Activated naive CD4-positive, alpha-beta T cell treated with anti-CD3 and anti-CD28 coated beads for 36 hours (primary cell): ENCODE measurements at regions of chr3 and their contacts with region 1.

Region 1: DNA sequence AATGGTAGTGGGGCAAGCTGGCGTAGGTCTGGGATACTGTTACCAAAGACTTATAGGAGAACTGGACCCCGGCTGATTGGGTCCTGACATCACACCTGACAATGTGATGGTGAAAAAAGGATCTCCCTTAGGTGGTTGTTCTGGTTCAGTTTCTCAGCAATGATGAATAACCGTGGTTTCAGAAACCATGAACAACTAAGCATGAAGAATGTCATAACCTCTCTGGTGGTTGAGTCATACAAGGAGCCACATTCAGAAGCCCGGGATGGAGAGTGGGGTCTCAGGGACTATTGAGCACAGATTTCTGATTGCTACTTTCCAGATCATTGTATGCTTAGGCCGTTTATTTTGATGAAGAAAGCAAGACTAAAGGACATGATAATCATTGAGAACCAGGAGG is 17.4 kb downstream of the GPR160 start:
- DNase-seq: peak; percentile 58
- H3K4me3 Mint-ChIP-seq: no peak overlapping the region
- H3K27ac Mint-ChIP-seq: no peak overlapping the region
- H3K4me1 Mint-ChIP-seq: peaks cover 50% of the 10 kb centered on the region
- H3K27me3 Mint-ChIP-seq: no peaks in the 10 kb centered on the region

Region 2: GRCh38 chr3:169759256-169759655 is 296.0 kb before region 1 on chr3:
- CTCF ChIA-PET with region 1: interaction called, 3 read pairs
- intact Hi-C with region 1: loop called (anchors 1 kb)
- DNase-seq: peak; percentile 24
- H3K4me3 Mint-ChIP-seq: no peak overlapping the region
- H3K27ac Mint-ChIP-seq: peak overlapping the region; percentile 62
- H3K4me1 Mint-ChIP-seq: peaks cover 25% of the 10 kb centered on the region
- H3K27me3 Mint-ChIP-seq: no peaks in the 10 kb centered on the region

Region 3: DNA sequence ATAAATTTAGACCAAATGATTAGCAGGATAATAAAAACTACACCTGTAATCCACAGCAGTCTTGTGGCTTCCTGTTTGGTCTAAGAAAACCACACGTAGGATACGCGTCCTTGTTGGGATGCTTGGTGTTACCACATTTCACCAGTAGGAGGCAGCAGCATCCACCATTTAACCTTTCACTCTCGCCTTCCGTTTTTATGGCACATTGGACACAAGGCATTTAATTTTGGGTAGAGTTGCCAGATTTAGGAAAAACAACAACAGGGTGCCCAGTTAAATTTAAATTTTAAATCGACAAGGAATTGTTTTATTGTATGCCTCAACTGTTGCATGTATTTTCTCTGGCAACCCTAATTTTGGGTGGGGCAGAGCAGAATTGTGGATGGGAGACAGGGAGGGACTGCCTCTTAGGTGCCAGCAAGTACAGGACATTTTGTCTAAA is 191.7 kb before region 1 on chr3:
- CTCF ChIA-PET with region 1: interaction called, 3 read pairs
- intact Hi-C with region 1: loop called (anchors 1 kb)
- DNase-seq: peak; percentile 86
- H3K4me3 Mint-ChIP-seq: no peak overlapping the region
- H3K27ac Mint-ChIP-seq: no peak overlapping the region
- H3K4me1 Mint-ChIP-seq: peaks cover 25% of the 10 kb centered on the region
- H3K27me3 Mint-ChIP-seq: no peaks in the 10 kb centered on the region

Region 4: DNA sequence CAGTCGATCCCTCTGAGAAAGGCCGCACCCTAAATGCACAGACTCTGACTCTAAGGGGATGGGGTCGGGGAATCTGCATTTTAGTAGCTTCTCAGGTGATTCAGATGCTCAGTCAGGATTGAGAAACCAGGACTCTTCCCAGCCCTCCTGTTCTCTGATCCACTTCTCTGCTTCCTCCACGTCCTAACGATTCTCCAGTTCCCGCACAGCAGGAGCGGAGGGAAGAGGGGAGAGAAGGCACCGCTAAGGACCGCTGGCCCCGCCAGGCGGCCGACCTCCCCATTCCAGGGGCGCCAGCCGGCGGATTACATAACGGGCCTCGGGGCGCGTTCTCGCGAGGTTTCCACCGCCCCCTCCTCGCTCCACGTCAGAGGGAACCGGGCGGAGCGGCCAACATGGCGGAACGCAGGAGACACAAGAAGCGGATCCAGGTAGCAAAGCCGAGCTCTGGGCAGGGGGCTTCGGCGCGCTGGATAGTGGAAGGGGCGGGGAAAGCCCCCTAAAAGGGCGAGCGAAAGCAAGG is 88.7 kb before region 1 on chr3 and contains the start of gene SEC62:
- CTCF ChIA-PET with region 1: interaction called, 3 read pairs
- intact Hi-C with region 1: loop called (anchors 1 kb)
- DNase-seq: peak; percentile 97
- H3K4me3 Mint-ChIP-seq: peak within 1 kb of the TSS; percentile 96
- H3K27ac Mint-ChIP-seq: peak within 1 kb of the TSS; percentile 97
- H3K4me1 Mint-ChIP-seq: peaks cover 63% of the 10 kb centered on the region
- H3K27me3 Mint-ChIP-seq: no peaks in the 10 kb centered on the region
- total RNA-seq, gene SEC62: 60.0 to 73.3 TPM

Region 5: GRCh38 chr3:170044271-170044670 is 10.9 kb before region 1 on chr3:
- CTCF ChIA-PET with region 1: interaction called, 18 read pairs
- intact Hi-C with region 1: no loop called
- DNase-seq: no peak
- H3K4me3 Mint-ChIP-seq: no peak overlapping the region
- H3K27ac Mint-ChIP-seq: no peak overlapping the region
- H3K4me1 Mint-ChIP-seq: peaks cover 22% of the 10 kb centered on the region
- H3K27me3 Mint-ChIP-seq: no peaks in the 10 kb centered on the region

Region 6: GRCh38 chr3:170107941-170108340 is 52.7 kb after region 1 on chr3:
- CTCF ChIA-PET with region 1: no interaction called
- intact Hi-C with region 1: no loop called
- DNase-seq: no peak
- H3K4me3 Mint-ChIP-seq: no peak overlapping the region
- H3K27ac Mint-ChIP-seq: no peak overlapping the region
- H3K4me1 Mint-ChIP-seq: peaks cover 35% of the 10 kb centered on the region
- H3K27me3 Mint-ChIP-seq: no peaks in the 10 kb centered on the region

Region 7: GRCh38 chr3:170128977-170129431 is 73.8 kb after region 1 on chr3:
- CTCF ChIA-PET with region 1: no interaction called
- intact Hi-C with region 1: loop called (anchors 2 kb)
- DNase-seq: peak; percentile 48
- H3K4me3 Mint-ChIP-seq: peak overlapping the region; percentile 20
- H3K27ac Mint-ChIP-seq: peak overlapping the region; percentile 76
- H3K4me1 Mint-ChIP-seq: peaks cover 40% of the 10 kb centered on the region
- H3K27me3 Mint-ChIP-seq: no peaks in the 10 kb centered on the region

Region 8: GRCh38 chr3:170257145-170257544 is 201.9 kb after region 1 on chr3:
- CTCF ChIA-PET with region 1: no interaction called
- intact Hi-C with region 1: loop called (anchors 5 kb)
- DNase-seq: peak; percentile 58
- H3K4me3 Mint-ChIP-seq: no peak overlapping the region
- H3K27ac Mint-ChIP-seq: no peak overlapping the region
- H3K4me1 Mint-ChIP-seq: peaks cover 41% of the 10 kb centered on the region
- H3K27me3 Mint-ChIP-seq: no peaks in the 10 kb centered on the region

Region 9: DNA sequence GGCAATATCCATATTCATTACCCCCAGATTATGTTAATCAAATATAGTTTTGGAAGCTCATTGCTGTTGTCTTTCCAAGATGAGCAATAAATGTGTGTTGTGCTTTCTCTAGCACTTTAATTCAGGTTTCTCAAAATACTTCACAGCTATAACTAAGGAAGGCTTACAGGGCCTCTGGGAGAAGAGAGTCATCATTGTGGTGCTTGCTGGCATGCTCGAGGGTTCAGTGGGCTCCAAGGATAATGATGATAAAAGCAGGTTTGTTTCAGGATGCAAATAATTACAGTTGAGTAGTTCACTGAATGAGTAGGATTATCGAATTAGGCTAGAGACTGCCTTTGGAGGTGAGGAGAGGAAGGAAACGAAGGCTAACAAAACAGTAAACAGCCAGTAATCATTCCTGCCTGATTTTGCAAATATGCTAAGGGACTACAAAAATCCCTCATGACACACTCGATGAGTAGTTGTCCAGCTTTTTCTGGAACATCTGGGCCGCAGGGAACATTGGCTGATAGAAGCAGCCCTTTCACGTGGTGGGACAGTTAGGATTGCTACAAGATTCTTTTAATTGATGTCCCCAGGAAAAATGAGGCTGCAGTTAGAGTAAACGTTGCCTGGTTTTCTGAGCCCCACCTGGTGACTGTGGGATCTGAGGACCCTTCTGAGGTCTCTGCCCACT is 476.6 kb after region 1 on chr3:
- CTCF ChIA-PET with region 1: no interaction called
- intact Hi-C with region 1: no loop called
- DNase-seq: no peak
- H3K4me3 Mint-ChIP-seq: no peak overlapping the region
- H3K27ac Mint-ChIP-seq: no peak overlapping the region
- H3K4me1 Mint-ChIP-seq: no peaks in the 10 kb centered on the region
- H3K27me3 Mint-ChIP-seq: peaks cover 2% of the 10 kb centered on the region